Natural killer cell (primary cell): ENCODE measurements at regions of chr19 and their contacts with region 1.

Region 1: GRCh38 chr19:48637170-48637947 is at the start of gene DBP:
- DNase-seq: peak; percentile 99 to 100
- ATAC-seq: peak; percentile 70 to 87 (median 76)
- H3K4me3 ChIP-seq: peak within 1 kb of the TSS; percentile 72
- H3K4me3 Mint-ChIP-seq: peak within 1 kb of the TSS; percentile 95
- H3K27ac ChIP-seq: peak within 1 kb of the TSS; percentile 97
- H3K27ac Mint-ChIP-seq: peak within 1 kb of the TSS; percentile 99
- H3K4me1 ChIP-seq: peaks cover 54% of the 10 kb centered on the region
- H3K4me1 Mint-ChIP-seq: peaks cover 39 to 51% of the 10 kb centered on the region in 2 donors
- H3K27me3 ChIP-seq: no peaks in the 10 kb centered on the region
- H3K27me3 Mint-ChIP-seq: no peaks in the 10 kb centered on the region
- CTCF ChIP-seq: no peak
- total RNA-seq, gene DBP: 16.4 to 31.2 (median 24.3) TPM

Region 2: GRCh38 chr19:48333467-48334384 is 303.6 kb before region 1 on chr19:
- intact Hi-C with region 1: loop called (anchors 5 kb)
- DNase-seq: peak; percentile 93 to 97
- ATAC-seq: peak; percentile 67 to 85 (median 67)
- H3K4me3 ChIP-seq: peak overlapping the region; percentile 80
- H3K4me3 Mint-ChIP-seq: peak overlapping the region; percentile 99
- H3K27ac ChIP-seq: peak overlapping the region; percentile 98
- H3K27ac Mint-ChIP-seq: peak overlapping the region; percentile 100
- H3K4me1 ChIP-seq: peaks cover 55% of the 10 kb centered on the region
- H3K4me1 Mint-ChIP-seq: peaks cover 53 to 56% of the 10 kb centered on the region in 2 donors
- H3K27me3 ChIP-seq: no peaks in the 10 kb centered on the region
- H3K27me3 Mint-ChIP-seq: no peaks in the 10 kb centered on the region
- CTCF ChIP-seq: peak; percentile 82

Region 3: GRCh38 chr19:48618916-48619691 is 18.3 kb before region 1 on chr19 and contains the starts of genes RPL18 and SPHK2:
- intact Hi-C with region 1: loop called (anchors 2 kb)
- DNase-seq: peak; percentile 94 to 99
- ATAC-seq: peak; percentile 79 to 94 (median 83)
- H3K4me3 ChIP-seq: peak within 1 kb of the TSS; percentile 99
- H3K4me3 Mint-ChIP-seq: peak within 1 kb of the TSS; percentile 96
- H3K27ac ChIP-seq: peak within 1 kb of the TSS; percentile 65
- H3K27ac Mint-ChIP-seq: peak within 1 kb of the TSS; percentile 97 to 99
- H3K4me1 ChIP-seq: peaks cover 54% of the 10 kb centered on the region
- H3K4me1 Mint-ChIP-seq: peaks cover 46 to 50% of the 10 kb centered on the region in 2 donors
- H3K27me3 ChIP-seq: no peaks in the 10 kb centered on the region
- H3K27me3 Mint-ChIP-seq: no peaks in the 10 kb centered on the region
- CTCF ChIP-seq: no peak
- total RNA-seq, gene RPL18: 900 to 1,086 (median 1,066) TPM
- total RNA-seq, gene SPHK2: 18.6 to 28.3 (median 23.2) TPM

Region 4: GRCh38 chr19:48685583-48685982 is 48.2 kb after region 1 on chr19:
- intact Hi-C with region 1: no loop called
- DNase-seq: no peak
- ATAC-seq: no peak
- H3K4me3 ChIP-seq: no peak overlapping the region
- H3K4me3 Mint-ChIP-seq: no peak overlapping the region
- H3K27ac ChIP-seq: no peak overlapping the region
- H3K27ac Mint-ChIP-seq: no peak overlapping the region
- H3K4me1 ChIP-seq: peaks cover 6% of the 10 kb centered on the region
- H3K4me1 Mint-ChIP-seq: no peaks in the 10 kb centered on the region
- H3K27me3 ChIP-seq: no peaks in the 10 kb centered on the region
- H3K27me3 Mint-ChIP-seq: no peaks in the 10 kb centered on the region
- CTCF ChIP-seq: no peak

Region 5: GRCh38 chr19:48872182-48872883 is 235.0 kb after region 1 on chr19 and contains the start of gene PPP1R15A:
- intact Hi-C with region 1: loop called (anchors 10 kb)
- DNase-seq: peak; percentile 99 to 100
- ATAC-seq: peak; percentile 41 to 65 (median 63)
- H3K4me3 ChIP-seq: peak within 1 kb of the TSS; percentile 86
- H3K4me3 Mint-ChIP-seq: peak within 1 kb of the TSS; percentile 100
- H3K27ac ChIP-seq: peak within 1 kb of the TSS; percentile 99
- H3K27ac Mint-ChIP-seq: peak within 1 kb of the TSS; percentile 98 to 100
- H3K4me1 ChIP-seq: peaks cover 45% of the 10 kb centered on the region
- H3K4me1 Mint-ChIP-seq: peaks cover 43 to 46% of the 10 kb centered on the region in 2 donors
- H3K27me3 ChIP-seq: no peaks in the 10 kb centered on the region
- H3K27me3 Mint-ChIP-seq: peaks cover 0 to 16% of the 10 kb centered on the region in 2 donors
- CTCF ChIP-seq: no peak
- total RNA-seq, gene PPP1R15A: 942 to 1,308 (median 1,174) TPM

Region 6: DNA sequence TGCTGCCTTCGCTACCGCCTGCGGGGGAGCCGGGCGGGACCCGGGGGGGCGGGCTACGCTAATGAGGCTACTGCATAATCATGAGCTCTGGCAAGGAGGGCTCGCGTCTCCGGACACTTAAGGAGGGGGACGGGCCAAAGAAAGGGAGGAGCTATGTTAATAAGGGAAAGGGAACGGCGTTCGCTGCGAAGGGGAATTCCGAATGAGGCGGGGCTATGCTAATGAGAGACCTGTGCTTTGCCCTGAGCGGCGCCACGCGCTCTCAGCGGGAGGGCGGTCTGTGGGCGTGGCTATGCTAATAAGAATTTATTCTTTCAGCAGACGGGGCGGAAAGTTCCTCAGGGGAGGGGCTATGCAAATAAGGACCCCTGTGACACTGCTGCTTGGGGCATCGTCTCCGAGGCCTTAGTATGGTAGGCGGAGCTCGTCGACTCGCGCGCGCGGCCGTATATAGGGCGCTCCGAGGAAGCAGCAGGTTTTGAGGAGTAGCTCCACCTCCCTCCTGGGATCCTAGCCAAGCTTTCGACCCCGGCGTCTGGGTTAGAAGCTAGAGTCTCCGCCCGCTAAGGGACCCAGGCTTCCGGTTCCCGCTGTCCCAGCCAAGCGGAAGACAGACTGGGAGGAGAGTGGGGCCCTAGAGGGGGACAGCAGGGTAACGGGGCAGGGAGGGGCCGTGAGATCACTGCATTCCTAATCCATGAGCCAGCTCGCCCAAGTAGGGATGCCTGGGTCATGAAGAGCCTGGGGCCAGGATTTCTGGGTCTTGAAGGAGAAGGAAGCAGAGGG is 1002.9 kb after region 1 on chr19 and contains the start of gene RRAS:
- intact Hi-C with region 1: loop called (anchors 5 kb)
- DNase-seq: peak; percentile 99 to 100
- ATAC-seq: peak; percentile 71 to 87 (median 73)
- H3K4me3 ChIP-seq: peak within 1 kb of the TSS; percentile 58
- H3K4me3 Mint-ChIP-seq: peak within 1 kb of the TSS; percentile 93
- H3K27ac ChIP-seq: peak within 1 kb of the TSS; percentile 86
- H3K27ac Mint-ChIP-seq: peak within 1 kb of the TSS; percentile 96 to 100
- H3K4me1 ChIP-seq: peaks cover 44% of the 10 kb centered on the region
- H3K4me1 Mint-ChIP-seq: peaks cover 45 to 63% of the 10 kb centered on the region in 2 donors
- H3K27me3 ChIP-seq: no peaks in the 10 kb centered on the region
- H3K27me3 Mint-ChIP-seq: no peaks in the 10 kb centered on the region
- CTCF ChIP-seq: no peak
- total RNA-seq, gene RRAS: 2.0 to 7.7 (median 5.9) TPM